ENCODE measurements at regions of chr9 and their contacts with region 1.

Region 1: GRCh38 chr9:90914868-90915483 is 113.4 kb downstream of the SYK start:
- DNase-seq: peak; percentile 80
- H3K4me3 Mint-ChIP-seq: no peak overlapping the region
- H3K27ac Mint-ChIP-seq: no peak overlapping the region
- H3K4me1 Mint-ChIP-seq: peaks cover 7% of the 10 kb centered on the region
- H3K27me3 Mint-ChIP-seq: no peaks in the 10 kb centered on the region

Region 2: DNA sequence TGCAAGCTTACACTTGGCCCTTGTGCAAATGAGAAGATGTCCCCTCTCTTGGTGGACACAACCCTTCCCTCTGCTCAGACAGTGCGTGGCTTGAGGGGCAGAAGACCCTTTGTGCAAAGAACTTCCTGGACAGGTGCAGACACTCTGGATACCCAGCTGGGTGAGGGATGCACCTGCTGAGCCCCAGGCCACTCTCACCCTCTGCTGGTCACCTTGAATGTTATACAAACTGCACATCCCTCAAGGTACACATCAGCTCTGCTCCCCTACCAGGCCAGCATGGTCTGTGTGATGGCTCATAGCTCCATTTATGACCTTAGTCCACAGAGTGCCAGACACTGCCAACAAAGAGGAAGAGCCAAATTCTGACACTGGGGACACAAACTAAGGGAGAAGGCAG is 269.3 kb before region 1 on chr9:
- CTCF ChIA-PET with region 1: no interaction called
- POLR2A ChIA-PET with region 1: no interaction called
- DNase-seq: no peak
- H3K4me3 Mint-ChIP-seq: no peak overlapping the region
- H3K27ac Mint-ChIP-seq: peak overlapping the region; percentile 11
- H3K4me1 Mint-ChIP-seq: peaks cover 1% of the 10 kb centered on the region
- H3K27me3 Mint-ChIP-seq: peaks cover 46% of the 10 kb centered on the region

Region 3: GRCh38 chr9:90770182-90770738 is 144.7 kb before region 1 on chr9:
- CTCF ChIA-PET with region 1: no interaction called
- POLR2A ChIA-PET with region 1: no interaction called
- DNase-seq: no peak
- H3K4me3 Mint-ChIP-seq: no peak overlapping the region
- H3K27ac Mint-ChIP-seq: no peak overlapping the region
- H3K4me1 Mint-ChIP-seq: no peaks in the 10 kb centered on the region
- H3K27me3 Mint-ChIP-seq: peaks cover 12% of the 10 kb centered on the region

Region 4: DNA sequence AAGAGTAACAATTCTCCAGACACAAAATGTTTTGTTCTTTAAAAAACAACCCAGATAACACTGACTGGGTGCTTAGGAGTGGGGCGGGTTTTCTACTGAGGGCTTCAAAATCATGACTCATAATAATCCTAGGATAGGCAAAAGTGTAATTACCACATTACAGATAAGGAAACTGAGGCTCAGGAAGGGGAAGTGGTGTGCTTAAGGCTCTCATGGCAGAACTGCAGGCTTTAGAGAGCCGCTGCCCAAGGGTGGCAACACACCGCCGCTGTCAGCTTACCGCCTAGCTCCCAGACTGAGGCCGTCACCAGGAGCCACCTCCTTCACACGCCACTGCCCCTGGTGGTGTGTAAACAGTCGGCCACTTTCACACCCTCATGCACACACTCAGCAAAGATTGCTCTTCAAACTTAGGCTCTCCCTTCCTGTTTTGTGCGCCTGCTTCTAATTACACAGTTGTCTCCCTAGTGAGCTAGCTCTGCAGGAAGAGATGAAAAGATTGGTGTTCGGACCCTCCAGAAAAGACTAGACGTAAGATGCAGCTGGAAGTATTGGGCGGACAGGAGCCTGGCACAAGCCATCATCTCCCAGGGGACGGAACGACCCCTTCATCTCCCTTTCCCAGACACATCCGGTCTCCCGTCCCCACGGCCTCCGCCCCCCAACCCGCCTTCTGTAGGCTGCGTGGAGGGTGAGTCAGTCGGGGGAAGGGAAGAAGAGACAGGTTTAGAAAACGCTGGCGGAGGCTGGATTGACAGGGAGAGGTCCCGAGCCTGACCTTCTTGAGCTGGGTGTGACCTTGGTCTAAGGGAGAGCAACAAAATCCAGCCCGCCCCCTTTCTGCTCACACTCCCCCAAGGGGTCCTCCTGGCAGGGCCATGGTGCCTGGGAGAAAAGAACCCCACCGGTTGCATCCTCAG is 49.4 kb after region 1 on chr9:
- CTCF ChIA-PET with region 1: interaction called, 10 read pairs
- POLR2A ChIA-PET with region 1: no interaction called
- DNase-seq: peak; percentile 56
- H3K4me3 Mint-ChIP-seq: peak overlapping the region; percentile 34
- H3K27ac Mint-ChIP-seq: peak overlapping the region; percentile 47
- H3K4me1 Mint-ChIP-seq: peaks cover 40% of the 10 kb centered on the region
- H3K27me3 Mint-ChIP-seq: no peaks in the 10 kb centered on the region

Region 5: GRCh38 chr9:91036826-91037510 is 122.0 kb after region 1 on chr9:
- CTCF ChIA-PET with region 1: interaction called, 10 read pairs
- POLR2A ChIA-PET with region 1: no interaction called
- DNase-seq: peak; percentile 85
- H3K4me3 Mint-ChIP-seq: peak overlapping the region; percentile 31
- H3K27ac Mint-ChIP-seq: peak overlapping the region; percentile 74
- H3K4me1 Mint-ChIP-seq: peaks cover 65% of the 10 kb centered on the region
- H3K27me3 Mint-ChIP-seq: no peaks in the 10 kb centered on the region

Region 6: DNA sequence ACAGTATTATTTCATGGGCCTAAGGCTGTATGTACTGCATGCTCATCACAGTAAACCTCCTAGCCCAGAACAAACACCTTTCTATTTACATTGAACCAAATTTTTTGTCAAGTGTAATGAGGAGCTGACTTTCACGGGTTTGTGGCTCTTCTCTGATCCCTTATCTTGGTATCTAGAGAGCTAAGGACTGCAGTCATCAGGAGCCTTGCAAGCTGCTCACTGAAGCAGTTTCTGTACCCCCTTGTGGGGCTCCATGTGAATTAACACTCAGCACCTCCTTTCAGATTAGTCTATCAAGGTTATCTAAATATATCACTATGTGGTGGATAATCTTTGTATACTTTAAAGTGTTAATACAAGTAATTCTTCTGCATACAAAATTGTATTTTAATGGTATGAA is 338.5 kb after region 1 on chr9:
- CTCF ChIA-PET with region 1: interaction called, 15 read pairs
- POLR2A ChIA-PET with region 1: no interaction called
- DNase-seq: peak; percentile 66
- H3K4me3 Mint-ChIP-seq: no peak overlapping the region
- H3K27ac Mint-ChIP-seq: no peak overlapping the region
- H3K4me1 Mint-ChIP-seq: peaks cover 56% of the 10 kb centered on the region
- H3K27me3 Mint-ChIP-seq: no peaks in the 10 kb centered on the region

Region 7: DNA sequence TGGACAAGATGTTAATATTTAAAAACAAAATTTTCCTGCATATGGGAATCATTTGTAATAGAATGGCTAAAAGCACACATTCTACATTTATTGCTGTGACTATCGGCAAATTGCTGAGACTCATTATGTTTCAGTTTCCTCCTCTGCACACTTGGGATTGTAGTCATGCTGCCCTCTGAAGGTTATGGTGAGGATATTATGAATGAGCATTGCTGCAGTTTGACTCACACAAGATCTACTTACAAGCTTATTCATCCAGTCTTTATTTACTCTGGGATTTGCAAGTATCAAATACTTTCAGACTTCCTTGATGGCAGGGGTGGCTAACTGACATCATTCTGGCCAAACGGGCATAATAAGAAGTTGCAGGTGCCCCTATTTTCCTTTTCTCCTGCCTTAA is 518.2 kb after region 1 on chr9:
- CTCF ChIA-PET with region 1: interaction called, 43 read pairs
- POLR2A ChIA-PET with region 1: interaction called, 3 read pairs
- DNase-seq: no peak
- H3K4me3 Mint-ChIP-seq: no peak overlapping the region
- H3K27ac Mint-ChIP-seq: no peak overlapping the region
- H3K4me1 Mint-ChIP-seq: peaks cover 30% of the 10 kb centered on the region
- H3K27me3 Mint-ChIP-seq: peaks cover 16% of the 10 kb centered on the region

Region 8: DNA sequence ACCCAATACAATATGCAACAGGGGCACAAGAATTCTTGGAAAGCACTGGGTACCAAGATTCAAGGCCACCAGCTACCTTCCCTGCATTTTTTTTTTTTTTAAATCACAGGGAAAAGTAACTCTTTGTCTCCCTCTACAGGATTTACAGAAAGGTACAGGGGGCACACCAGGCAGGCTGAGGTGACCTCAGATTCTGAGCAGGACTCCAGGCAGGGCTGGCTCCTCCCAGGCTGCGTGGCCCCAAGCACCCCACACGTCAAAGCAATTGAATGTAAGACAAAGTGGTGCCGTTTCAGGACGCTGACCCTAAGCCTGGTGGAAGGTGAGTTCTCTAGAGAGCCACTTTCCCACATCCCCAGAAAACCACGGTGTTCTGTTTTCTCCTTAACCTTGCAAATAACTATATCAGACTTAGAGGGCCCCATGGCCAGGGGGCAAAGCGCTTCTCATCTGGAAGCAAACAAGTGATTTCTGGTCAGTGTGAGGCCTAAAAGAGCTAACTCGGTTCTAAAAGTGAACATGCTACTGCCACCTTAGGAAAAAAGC is 812.4 kb after region 1 on chr9:
- CTCF ChIA-PET with region 1: interaction called, 19 read pairs
- POLR2A ChIA-PET with region 1: no interaction called
- DNase-seq: peak; percentile 42
- H3K4me3 Mint-ChIP-seq: no peak overlapping the region
- H3K27ac Mint-ChIP-seq: no peak overlapping the region
- H3K4me1 Mint-ChIP-seq: peaks cover 11% of the 10 kb centered on the region
- H3K27me3 Mint-ChIP-seq: peaks cover 4% of the 10 kb centered on the region